Heart right ventricle (tissue), 16 donors: ENCODE measurements at regions of chr4 and their contacts with region 1.

Region 1: DNA sequence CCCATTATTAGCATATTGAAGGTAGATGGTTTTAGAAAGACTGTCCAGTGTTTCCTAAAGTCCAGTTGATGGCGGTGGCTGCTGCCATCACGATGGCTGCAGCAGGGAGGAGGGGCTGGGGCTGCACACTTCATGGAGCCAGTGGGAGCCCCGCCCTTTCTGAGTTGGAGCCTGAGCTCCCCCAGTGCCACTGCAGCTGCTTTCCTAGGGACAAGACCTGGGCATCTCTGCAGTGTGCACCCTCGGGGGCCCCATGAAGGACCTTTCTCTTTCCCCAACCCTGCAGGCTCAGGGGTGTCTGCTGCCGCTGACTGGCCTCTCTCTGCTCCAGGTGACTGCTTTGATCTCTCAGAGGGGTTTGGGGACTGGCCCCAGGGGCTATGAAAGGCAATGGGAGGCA is 502.4 kb downstream of the GBA3 start:
- DNase-seq: no peak
- ATAC-seq: no peak
- H3K4me3 ChIP-seq: no peak overlapping the region
- H3K27ac ChIP-seq: no peak overlapping the region
- H3K4me1 ChIP-seq: no peaks in the 10 kb centered on the region
- H3K27me3 ChIP-seq: no peaks in the 10 kb centered on the region
- CTCF ChIP-seq: no peak

Region 2: GRCh38 chr4:22911285-22911684 is 283.9 kb before region 1 on chr4:
- intact Hi-C with region 1: no loop called
- DNase-seq: no peak
- ATAC-seq: no peak
- H3K4me3 ChIP-seq: no peak overlapping the region
- H3K27ac ChIP-seq: no peak overlapping the region
- H3K4me1 ChIP-seq: no peaks in the 10 kb centered on the region
- H3K27me3 ChIP-seq: no peaks in the 10 kb centered on the region
- CTCF ChIP-seq: no peak

Region 3: DNA sequence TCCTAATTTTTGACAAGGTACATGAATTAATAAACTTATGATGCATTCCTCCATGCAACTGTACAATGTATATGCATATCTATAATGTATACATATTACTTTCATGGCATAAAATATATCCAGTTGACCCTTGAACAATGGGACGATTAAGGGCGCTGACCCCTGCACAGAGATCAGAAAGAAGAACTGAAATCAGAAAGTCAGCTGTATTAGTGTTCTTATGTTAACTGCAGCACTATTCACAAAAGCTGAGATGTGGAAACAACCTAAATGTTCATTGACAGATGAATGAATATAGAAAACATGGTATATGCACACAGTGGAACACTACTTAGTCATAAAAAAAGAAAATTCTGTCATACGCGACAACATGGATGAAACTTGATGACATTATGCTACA is 45.3 kb before region 1 on chr4:
- intact Hi-C with region 1: loop called in 1 of 10 experiments (anchors 1 kb)
- DNase-seq: no peak
- ATAC-seq: no peak
- H3K4me3 ChIP-seq: no peak overlapping the region
- H3K27ac ChIP-seq: no peak overlapping the region
- H3K4me1 ChIP-seq: peaks cover 0 to 4% (median 0%) of the 10 kb centered on the region in 9 donors
- H3K27me3 ChIP-seq: no peaks in the 10 kb centered on the region
- CTCF ChIP-seq: no peak